ENCODE measurements at regions of chr1 and their contacts with region 1.

Region 1: GRCh38 chr1:44786138-44786840 is 1.7 kb downstream of the BEST4 start:
- DNase-seq: peak; percentile 81
- H3K4me3 ChIP-seq: peak overlapping the region in 2 of 3 donors; percentile 8 to 33
- H3K27ac ChIP-seq: peak overlapping the region; percentile 69 to 77 (median 73)
- H3K4me1 ChIP-seq: peaks cover 18 to 31% of the 10 kb centered on the region in 2 donors
- H3K27me3 ChIP-seq: no peaks in the 10 kb centered on the region
- CTCF ChIP-seq: peak; percentile 99 to 100 (median 99)
- POLR2A ChIP-seq: peak in 1 of 2 donors; percentile 14

Region 2: DNA sequence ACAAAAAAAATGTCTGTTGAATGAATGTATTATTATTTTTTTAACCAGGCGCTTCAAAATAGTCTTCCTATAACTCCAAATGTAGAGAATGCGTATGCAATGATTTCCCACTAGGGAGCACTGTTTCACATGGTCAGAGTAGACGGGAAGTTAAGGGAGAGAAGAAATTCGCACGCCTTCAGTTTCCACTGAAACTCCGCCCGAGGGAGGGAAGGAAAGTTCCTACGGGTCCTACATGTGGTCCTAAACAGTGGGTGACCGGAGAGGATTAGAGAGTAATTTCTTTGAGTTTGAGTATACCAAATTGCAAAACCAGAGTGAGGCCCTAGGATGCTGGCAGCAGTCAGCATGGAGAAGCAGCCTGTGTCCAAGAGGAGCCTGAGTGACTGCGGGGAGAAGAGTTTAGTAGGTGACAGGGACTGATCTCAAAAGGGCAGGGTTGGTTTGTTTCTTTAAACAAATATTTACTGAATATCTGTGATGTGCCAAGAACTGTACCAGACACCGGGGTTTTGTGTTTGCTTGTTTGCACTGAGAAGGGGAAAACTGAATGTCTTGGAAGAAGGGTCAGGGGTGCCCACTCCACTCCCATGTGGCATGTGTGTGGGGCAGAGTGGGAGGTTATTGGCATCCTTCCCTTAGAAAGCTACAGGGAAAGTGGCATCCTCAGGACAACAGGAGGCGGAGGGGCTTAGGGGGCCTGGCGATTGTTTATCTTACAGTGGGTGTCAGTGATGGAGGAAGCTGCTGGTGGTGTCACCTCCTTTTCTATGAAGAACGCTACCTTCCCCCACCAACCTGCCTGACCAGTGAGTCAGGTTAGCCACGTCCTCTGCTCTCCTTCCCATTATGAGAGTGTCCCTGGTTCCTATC is 78.1 kb before region 1 on chr1:
- intact Hi-C with region 1: no loop called
- DNase-seq: peak; percentile 18 to 37
- H3K4me3 ChIP-seq: no peak overlapping the region
- H3K27ac ChIP-seq: no peak overlapping the region
- H3K4me1 ChIP-seq: no peaks in the 10 kb centered on the region
- H3K27me3 ChIP-seq: no peaks in the 10 kb centered on the region
- CTCF ChIP-seq: peak in 3 of 6 experiments; percentile 37 to 69 (median 46)
- POLR2A ChIP-seq: no peak

Region 3: GRCh38 chr1:44721485-44722361 is 64.6 kb before region 1 on chr1:
- intact Hi-C with region 1: loop called (anchors 10 kb)
- DNase-seq: peak; percentile 76 to 89
- H3K4me3 ChIP-seq: no peak overlapping the region
- H3K27ac ChIP-seq: peak overlapping the region; percentile 36 to 86 (median 71)
- H3K4me1 ChIP-seq: no peaks in the 10 kb centered on the region
- H3K27me3 ChIP-seq: no peaks in the 10 kb centered on the region
- CTCF ChIP-seq: no peak
- POLR2A ChIP-seq: peak in 1 of 2 donors; percentile 73

Region 4: GRCh38 chr1:44835738-44836675 is 49.7 kb after region 1 on chr1:
- intact Hi-C with region 1: loop called (anchors 5 kb)
- DNase-seq: peak; percentile 85 to 91
- H3K4me3 ChIP-seq: no peak overlapping the region
- H3K27ac ChIP-seq: no peak overlapping the region
- H3K4me1 ChIP-seq: peaks cover 0 to 4% of the 10 kb centered on the region in 2 donors
- H3K27me3 ChIP-seq: no peaks in the 10 kb centered on the region
- CTCF ChIP-seq: peak; percentile 43 to 86 (median 79)
- POLR2A ChIP-seq: no peak

Region 5: GRCh38 chr1:44881011-44881632 is 94.8 kb after region 1 on chr1:
- intact Hi-C with region 1: no loop called
- DNase-seq: no peak
- H3K4me3 ChIP-seq: no peak overlapping the region
- H3K27ac ChIP-seq: no peak overlapping the region
- H3K4me1 ChIP-seq: no peaks in the 10 kb centered on the region
- H3K27me3 ChIP-seq: no peaks in the 10 kb centered on the region
- CTCF ChIP-seq: no peak
- POLR2A ChIP-seq: no peak